Dendritic cell treated with granulocyte-macrophage colony-stimulating factor and Interleukin-4, amounts not matched to agents 40 ng/mL and 50 ng/mL, for 4 days (primary cell): ENCODE measurements at regions of chr1 and their contacts with region 1.

Region 1: GRCh38 chr1:173714759-173715537 is at the start of gene KLHL20:
- H3K4me3 Mint-ChIP-seq: peak within 1 kb of the TSS; percentile 98
- H3K27ac Mint-ChIP-seq: peak within 1 kb of the TSS; percentile 96
- H3K4me1 Mint-ChIP-seq: peaks cover 6% of the 10 kb centered on the region
- H3K27me3 Mint-ChIP-seq: peaks cover 20% of the 10 kb centered on the region

Region 2: GRCh38 chr1:173476664-173477285 is 238.2 kb before region 1 on chr1:
- intact Hi-C with region 1: loop called (anchors 10 kb)
- H3K4me3 Mint-ChIP-seq: peak overlapping the region; percentile 87
- H3K27ac Mint-ChIP-seq: peak overlapping the region; percentile 96
- H3K4me1 Mint-ChIP-seq: peaks cover 53% of the 10 kb centered on the region
- H3K27me3 Mint-ChIP-seq: no peaks in the 10 kb centered on the region

Region 3: DNA sequence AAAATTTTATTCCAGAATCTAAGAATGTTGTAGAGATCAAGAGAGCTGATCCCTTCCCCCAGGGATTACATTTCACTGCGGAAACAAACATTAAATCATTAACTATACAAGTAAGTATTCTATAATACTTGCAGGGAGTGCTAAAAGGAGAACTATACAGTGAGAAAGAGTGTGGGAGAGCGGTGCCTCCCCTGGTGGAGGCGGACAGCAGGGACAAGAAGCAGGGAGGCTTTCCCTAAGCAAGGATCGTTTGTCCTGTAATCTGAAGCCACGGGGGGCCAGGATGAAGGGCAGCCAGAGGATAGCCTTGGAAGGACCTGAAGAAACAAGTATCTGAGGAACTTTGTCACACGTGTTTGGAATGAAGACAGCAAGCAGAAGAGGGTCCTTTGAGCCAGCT is 152.1 kb before region 1 on chr1:
- intact Hi-C with region 1: no loop called
- H3K4me3 Mint-ChIP-seq: no peak overlapping the region
- H3K27ac Mint-ChIP-seq: no peak overlapping the region
- H3K4me1 Mint-ChIP-seq: no peaks in the 10 kb centered on the region
- H3K27me3 Mint-ChIP-seq: no peaks in the 10 kb centered on the region

Region 4: DNA sequence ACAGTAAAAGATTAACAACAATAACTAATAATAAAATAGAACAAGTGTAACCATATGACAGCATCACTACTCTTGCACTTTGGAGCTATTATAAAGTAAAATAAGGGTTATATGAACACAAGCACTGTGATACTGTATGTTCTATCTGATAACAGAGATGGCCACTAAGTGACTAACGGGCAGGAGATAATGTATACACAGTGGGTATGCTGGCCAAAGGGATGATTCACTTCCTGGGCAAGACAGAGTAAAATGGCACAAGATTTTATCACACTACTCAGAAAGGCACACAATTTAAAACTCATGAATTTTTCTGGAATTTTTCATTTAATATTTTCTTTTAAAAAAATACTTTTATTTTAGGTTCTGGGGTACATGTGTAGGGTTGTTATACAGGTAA is 124.4 kb before region 1 on chr1:
- intact Hi-C with region 1: no loop called
- H3K4me3 Mint-ChIP-seq: no peak overlapping the region
- H3K27ac Mint-ChIP-seq: no peak overlapping the region
- H3K4me1 Mint-ChIP-seq: no peaks in the 10 kb centered on the region
- H3K27me3 Mint-ChIP-seq: no peaks in the 10 kb centered on the region

Region 5: DNA sequence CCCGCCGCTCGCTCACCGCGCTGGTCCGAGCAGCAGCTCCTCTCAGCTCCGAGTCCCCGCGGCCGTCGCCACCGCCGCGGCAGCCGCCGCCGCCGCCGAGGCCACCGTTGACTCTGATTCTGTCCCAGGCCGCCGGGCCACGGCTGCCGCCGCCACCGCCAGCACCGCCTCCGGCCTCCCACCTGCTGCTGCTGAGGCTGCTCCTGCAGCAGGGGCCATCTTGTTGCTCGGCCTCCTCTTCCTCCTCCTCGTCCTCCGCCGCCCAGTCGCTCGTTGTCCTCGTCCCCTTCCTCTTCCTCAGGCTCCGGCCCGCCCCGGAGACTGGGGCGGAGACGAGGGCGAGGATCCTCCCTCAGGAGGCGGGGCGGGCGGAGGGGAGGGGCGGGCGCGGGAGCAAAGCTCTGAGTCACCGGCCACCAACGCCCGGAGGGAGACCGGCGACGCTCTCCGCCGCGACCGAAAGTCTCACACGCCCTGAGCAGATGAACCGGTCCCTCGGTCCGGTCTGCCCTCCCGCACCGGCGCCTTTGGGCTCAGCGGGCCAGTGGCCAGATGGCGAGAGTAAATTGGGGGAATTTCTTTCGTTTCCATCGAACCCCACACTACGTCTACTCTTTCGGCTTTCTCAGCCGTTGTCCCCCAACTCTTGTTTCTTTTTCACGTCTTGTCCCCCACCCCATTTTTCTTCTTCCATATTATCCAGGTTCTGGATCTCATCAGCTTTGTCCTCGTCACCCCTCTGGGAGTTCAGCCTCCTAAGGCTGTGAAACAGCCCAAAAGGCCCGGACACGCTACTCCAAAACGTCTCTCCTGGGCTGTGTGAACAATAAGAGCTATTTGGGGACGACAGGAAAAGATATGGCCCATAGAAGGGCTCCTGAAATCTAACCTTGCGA is 307.4 kb after region 1 on chr1 and contains the start of gene RC3H1:
- intact Hi-C with region 1: no loop called
- H3K4me3 Mint-ChIP-seq: peak within 1 kb of the TSS; percentile 87
- H3K27ac Mint-ChIP-seq: peak within 1 kb of the TSS; percentile 94
- H3K4me1 Mint-ChIP-seq: peaks cover 34% of the 10 kb centered on the region
- H3K27me3 Mint-ChIP-seq: no peaks in the 10 kb centered on the region

Region 6: DNA sequence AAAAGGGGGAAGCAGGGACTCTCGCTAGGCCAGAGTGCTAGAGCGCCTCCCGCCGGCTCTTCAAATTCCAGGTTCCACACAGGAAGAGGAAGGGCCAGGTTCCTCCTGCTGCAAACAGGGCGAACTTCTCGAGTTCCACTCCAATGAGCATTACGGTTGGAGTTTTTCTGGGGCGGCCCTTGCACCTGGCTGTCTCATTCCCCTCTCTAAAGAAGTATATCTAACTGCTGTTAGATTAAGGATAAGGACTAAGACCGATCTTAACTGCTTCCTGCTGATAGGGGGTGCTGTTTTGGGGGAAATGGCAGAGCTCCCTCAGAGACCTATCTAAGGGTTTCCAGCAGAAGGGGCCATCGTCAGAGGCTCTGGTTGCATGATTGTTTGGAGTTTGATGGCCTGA is 582.4 kb after region 1 on chr1:
- intact Hi-C with region 1: no loop called
- H3K4me3 Mint-ChIP-seq: no peak overlapping the region
- H3K27ac Mint-ChIP-seq: no peak overlapping the region
- H3K4me1 Mint-ChIP-seq: no peaks in the 10 kb centered on the region
- H3K27me3 Mint-ChIP-seq: no peaks in the 10 kb centered on the region